ENCODE measurements at regions of chr4 and their contacts with region 1.

Region 1: GRCh38 chr4:10554694-10555093 is 97.5 kb upstream of the ZNF518B start:
- DNase-seq: peak in 1 of 2 donors; percentile 32
- ATAC-seq: peak in 6 of 8 donors; percentile 52 to 75 (median 62)
- H3K4me3 ChIP-seq: no peak overlapping the region
- H3K27ac ChIP-seq: no peak overlapping the region
- H3K4me1 ChIP-seq: peaks cover 0 to 7% (median 0%) of the 10 kb centered on the region in 9 donors
- H3K27me3 ChIP-seq: peaks cover 0 to 37% (median 4%) of the 10 kb centered on the region in 7 donors
- CTCF ChIP-seq: peak; percentile 46 to 84 (median 80)

Region 2: DNA sequence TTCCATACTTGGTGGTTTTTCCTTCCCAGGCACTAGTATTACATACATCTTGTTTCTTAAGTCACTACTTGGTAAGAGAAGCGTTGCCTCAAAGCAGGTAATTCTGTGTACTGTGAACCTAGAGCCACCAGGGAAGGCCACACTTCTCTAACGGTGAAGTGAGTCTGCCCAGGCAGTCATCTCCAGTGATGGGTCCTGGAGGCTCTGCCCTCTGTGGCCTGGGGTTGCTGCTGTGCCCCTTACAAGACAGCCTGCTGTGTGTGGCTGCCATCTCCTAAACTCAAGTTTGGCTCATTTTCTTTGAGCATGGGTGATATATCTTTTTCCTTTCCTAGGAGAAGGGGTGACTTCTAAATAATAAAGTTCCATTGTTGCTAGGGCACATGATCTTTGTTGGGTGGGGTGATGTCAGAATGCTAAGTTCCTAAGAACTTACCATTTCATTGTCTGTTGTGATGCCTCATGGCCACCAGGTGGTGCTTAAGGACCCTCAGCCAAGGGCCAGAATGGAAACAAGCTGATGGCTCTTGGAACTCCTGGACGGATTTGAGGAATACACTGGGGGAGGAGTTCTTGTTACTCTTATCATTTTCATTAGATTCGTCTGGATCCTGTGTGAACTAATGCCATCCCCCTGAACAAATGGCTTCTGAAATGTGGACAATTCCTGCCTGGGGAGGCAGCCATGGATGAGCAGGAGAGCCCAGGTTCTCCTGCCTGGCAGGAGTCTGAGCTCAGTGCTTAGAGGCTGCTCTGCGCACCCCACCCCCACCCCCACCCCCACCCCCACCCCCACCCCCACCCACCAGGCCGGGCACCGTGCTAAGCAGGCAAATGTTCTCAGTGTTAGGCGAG is 397.0 kb before region 1 on chr4:
- intact Hi-C with region 1: loop called (anchors 2 to 5 kb)
- DNase-seq: peak in 1 of 2 donors; percentile 46
- ATAC-seq: peak; percentile 57 to 82 (median 68)
- H3K4me3 ChIP-seq: no peak overlapping the region
- H3K27ac ChIP-seq: no peak overlapping the region
- H3K4me1 ChIP-seq: peaks cover 0 to 8% (median 0%) of the 10 kb centered on the region in 9 donors
- H3K27me3 ChIP-seq: no peaks in the 10 kb centered on the region
- CTCF ChIP-seq: peak; percentile 69 to 87 (median 80)

Region 3: GRCh38 chr4:10164877-10165283 is 389.8 kb before region 1 on chr4:
- intact Hi-C with region 1: loop called in 3 of 10 experiments (anchors 2 to 5 kb)
- DNase-seq: peak in 1 of 2 donors; percentile 25
- ATAC-seq: no peak
- H3K4me3 ChIP-seq: no peak overlapping the region
- H3K27ac ChIP-seq: no peak overlapping the region
- H3K4me1 ChIP-seq: peaks cover 0 to 14% (median 0%) of the 10 kb centered on the region in 9 donors
- H3K27me3 ChIP-seq: peaks cover 0 to 3% (median 0%) of the 10 kb centered on the region in 7 donors
- CTCF ChIP-seq: peak; percentile 23 to 77 (median 64)

Region 4: GRCh38 chr4:10403633-10404445 is 150.9 kb before region 1 on chr4:
- intact Hi-C with region 1: loop called in 5 of 10 experiments (anchors 5 to 10 kb)
- DNase-seq: peak in 1 of 2 donors; percentile 11
- ATAC-seq: peak in 4 of 8 donors; percentile 56 to 67 (median 63)
- H3K4me3 ChIP-seq: no peak overlapping the region
- H3K27ac ChIP-seq: no peak overlapping the region
- H3K4me1 ChIP-seq: peaks cover 0 to 10% (median 0%) of the 10 kb centered on the region in 9 donors
- H3K27me3 ChIP-seq: no peaks in the 10 kb centered on the region
- CTCF ChIP-seq: peak in 8 of 9 donors; percentile 19 to 70 (median 59)

Region 5: GRCh38 chr4:10413177-10413576 is 141.5 kb before region 1 on chr4:
- intact Hi-C with region 1: loop called in 4 of 10 experiments (anchors 5 to 10 kb)
- DNase-seq: no peak
- ATAC-seq: no peak
- H3K4me3 ChIP-seq: no peak overlapping the region
- H3K27ac ChIP-seq: no peak overlapping the region
- H3K4me1 ChIP-seq: peaks cover 0 to under 1% (median 0%) of the 10 kb centered on the region in 9 donors
- H3K27me3 ChIP-seq: no peaks in the 10 kb centered on the region
- CTCF ChIP-seq: no peak

Region 6: DNA sequence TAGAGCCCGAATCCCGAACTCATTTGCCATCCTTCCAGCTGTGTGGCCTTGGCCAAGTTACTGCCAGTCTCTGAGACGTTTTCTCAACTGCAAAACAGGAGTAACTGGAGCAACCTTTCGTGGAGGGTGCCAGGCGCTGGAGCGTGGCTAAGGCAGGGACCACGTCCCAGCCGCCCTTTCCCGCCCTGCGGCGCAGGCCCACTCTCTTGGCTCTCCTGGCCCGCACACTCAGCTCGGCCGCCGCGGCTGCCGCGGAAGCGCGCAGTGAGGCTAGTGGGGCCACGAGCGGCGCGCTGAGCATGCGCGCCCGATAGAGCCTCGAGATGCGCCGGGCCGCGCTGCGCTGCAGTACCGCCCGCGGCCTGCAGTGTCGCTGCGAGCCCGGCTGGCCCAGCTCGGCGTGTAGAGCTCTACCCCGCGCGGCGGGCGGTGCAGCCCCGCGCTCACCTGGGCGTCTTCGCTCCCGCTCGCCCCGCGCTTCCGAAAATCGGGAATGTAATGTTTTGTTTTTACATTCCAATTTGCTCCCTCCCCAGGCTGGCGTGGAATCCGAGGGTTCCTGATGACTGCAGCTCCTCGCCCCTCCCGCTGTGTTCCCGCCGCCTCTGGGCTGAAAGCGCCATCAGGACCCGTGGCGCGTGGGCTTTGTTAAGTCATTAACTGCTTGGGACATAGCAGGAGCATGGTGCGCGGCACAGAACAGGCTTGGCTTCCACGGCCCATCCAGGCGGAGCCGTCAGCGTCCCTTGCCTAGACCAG is 93.4 kb before region 1 on chr4:
- intact Hi-C with region 1: loop called in 7 of 10 experiments (anchors 2 to 10 kb)
- DNase-seq: peak; percentile 15 to 70
- ATAC-seq: peak; percentile 78 to 93 (median 82)
- H3K4me3 ChIP-seq: peak overlapping the region in 8 of 10 donors; percentile 24 to 49 (median 38)
- H3K27ac ChIP-seq: no peak overlapping the region
- H3K4me1 ChIP-seq: peaks cover 0 to 26% (median 14%) of the 10 kb centered on the region in 9 donors
- H3K27me3 ChIP-seq: peaks cover 6 to 84% (median 41%) of the 10 kb centered on the region in 7 donors
- CTCF ChIP-seq: peak; percentile 83 to 98 (median 92)

Measured in heart right ventricle (tissue), 16 donors.